ENCODE measurements at regions of chrX and their contacts with region 1.

Region 1: DNA sequence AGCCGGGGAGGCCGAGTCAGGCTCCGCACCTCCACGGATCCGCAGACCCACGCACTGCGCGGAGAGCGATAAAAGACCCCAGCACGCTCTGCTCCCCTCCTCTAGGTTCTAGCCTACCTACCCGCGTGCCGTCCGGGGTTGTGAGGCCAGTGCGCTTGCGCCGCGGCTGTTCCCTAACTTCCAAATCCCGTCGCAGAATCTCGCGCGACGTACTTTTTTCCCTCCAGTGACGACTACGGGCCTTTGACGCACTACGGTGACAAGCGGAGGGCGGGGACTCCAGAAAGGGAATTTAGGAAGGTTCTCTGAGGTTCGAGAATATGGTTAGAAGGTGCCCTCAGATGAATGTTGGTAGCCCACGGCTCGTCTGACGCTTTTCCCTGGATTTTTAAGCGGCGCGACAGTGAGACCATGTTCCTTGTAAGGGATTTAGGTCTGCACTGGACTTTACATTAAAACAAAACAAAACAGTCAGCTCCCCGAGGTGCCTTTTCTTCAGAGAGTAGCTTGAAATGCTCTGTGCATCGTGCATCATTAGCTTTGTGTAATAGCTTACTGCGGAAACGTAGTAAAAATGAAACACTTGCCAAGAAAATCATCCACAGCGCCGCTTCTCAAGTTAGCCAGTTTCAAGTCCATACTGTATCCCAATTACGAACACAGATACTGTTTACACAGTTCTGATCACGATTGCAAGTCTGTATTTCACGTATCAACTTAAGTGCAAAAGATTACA is at the start of gene NKRF:
- DNase-seq: peak; percentile 97
- ATAC-seq: peak; percentile 96
- total RNA-seq, gene NKRF: 4.2 TPM

Region 2: DNA sequence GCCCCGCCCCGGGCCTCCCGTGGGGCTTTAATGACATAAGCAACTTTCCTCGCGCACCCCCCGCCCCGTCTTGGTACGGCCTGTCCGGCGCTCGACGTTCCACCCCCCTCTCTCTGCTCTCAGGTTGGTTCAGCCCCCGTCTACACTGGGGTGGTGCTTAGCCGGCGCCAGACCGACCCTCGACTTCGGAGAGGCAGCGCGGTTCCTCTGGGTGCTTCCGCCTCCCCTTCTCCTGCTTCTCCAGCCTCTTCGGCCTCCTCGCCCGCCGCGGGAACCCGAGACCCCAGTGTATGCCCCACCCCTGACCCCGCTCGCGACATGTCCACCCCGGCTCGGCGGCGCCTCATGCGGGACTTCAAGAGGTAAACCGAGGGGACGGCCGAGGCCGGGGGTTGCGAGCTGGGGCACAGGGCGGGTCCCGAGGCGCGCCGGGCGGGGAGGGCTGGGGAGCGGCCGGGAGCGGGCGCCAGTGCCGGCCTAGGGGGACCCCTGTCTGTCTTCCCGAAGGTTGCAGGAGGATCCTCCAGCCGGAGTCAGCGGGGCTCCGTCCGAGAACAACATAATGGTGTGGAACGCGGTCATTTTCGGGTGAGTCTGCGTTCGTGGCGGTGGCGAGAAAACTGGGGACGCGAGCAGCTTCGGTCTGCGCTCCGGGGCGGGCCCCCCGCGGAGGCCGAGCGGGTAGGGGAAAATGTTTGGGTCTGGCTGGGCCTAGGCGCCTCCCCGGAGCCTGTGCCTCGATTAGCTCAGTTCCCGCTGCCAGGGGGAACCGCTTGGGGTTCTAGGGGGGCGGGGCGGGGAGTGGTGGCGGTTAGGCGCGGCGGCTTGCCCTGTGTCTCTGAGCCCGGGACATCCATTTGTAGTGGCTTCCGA is 31.8 kb before region 1 on chrX and contains the start of gene UBE2A:
- intact Hi-C with region 1: no loop called
- DNase-seq: peak; percentile 97
- ATAC-seq: peak; percentile 98
- total RNA-seq, gene UBE2A: 66.3 TPM

Region 3: GRCh38 chrX:119667111-119667878 is 60.8 kb after region 1 on chrX:
- intact Hi-C with region 1: no loop called
- DNase-seq: no peak
- ATAC-seq: peak; percentile 69

Region 4: DNA sequence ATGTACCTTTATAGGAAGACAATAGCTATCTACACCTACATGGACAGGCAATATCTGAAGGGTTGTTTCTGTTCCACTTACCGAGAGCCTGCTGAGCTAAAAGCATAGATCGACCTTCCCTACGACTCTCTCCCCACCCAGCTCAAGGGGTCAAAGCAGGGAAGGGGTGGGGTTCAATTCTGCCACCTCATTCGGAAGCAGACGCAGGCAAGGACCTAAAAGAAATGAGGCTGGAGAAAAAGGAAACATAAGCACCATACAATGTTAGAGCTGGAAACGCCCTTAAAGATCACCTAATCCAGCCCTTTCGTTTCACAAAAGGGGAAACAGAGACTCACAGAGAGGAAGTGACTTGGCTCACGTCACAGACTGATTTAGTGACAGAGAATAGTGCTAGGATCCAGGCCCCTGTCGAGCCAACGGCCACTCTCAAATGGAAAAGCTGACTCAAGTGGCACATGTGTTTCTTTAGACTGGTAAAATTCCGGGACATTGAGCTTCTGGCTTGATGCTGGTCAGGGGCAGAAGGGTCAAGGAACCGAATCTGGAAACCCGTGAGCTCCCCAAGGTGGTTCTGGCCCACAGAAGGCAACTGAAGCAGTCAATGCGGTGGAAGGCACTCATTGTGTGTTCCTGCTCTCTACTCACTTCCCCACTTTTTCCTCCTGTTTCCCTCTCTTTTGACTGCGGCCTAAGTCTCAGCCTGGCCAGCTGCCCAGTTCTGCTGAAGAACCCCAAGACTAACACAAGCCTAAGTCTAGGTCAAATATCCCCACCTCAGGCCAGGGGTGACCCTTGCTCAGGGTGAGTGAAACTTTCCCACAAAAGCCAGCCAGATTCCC is 79.0 kb after region 1 on chrX:
- intact Hi-C with region 1: loop called (anchors 5 kb)
- DNase-seq: no peak
- ATAC-seq: peak; percentile 44

Region 5: DNA sequence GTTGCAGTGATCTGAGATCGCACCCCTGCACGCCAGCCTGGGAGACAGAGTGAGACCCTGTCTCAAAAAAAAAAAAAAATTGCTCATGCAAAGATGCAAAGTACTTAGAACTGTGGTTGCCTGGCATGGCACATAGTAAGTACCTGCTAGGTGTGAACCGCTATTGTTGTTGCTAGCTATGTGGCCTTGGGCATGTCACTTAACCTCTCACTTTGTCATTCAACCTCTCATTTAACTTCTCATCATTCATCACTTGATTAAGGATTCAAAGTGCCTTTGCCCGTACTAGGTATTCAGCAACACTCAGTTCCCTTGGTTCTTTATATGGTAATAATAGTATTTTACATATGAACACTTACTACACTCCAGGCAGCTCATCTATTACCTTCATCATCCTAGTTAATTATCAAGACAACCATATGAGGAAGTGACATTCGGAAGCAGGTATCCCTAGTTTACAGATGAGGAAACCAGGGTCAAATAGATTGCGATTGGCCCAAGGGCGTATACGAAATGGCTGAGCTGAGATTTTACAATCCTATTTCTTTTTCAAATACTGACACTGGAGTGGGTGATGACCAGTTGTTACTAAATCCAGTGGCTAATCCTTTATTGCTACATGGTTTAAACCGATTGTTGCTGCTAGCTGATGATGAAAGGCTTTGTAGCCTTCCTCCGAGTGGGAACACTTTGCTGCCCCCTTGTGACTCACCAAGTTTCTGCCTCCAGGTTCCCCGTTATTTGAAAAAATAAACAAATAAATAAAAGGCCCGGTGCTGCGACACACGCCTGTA is 123.2 kb after region 1 on chrX:
- intact Hi-C with region 1: loop called (anchors 5 kb)
- DNase-seq: no peak
- ATAC-seq: no peak